GM12878 (cell line): ENCODE measurements at regions of chr6 and their contacts with region 1.

Region 1: GRCh38 chr6:144778773-144779492 is 493.8 kb downstream of the UTRN start:
- DNase-seq: no peak
- ATAC-seq: peak; percentile 71
- H3K4me3 ChIP-seq: no peak overlapping the region
- H3K27ac ChIP-seq: no peak overlapping the region
- H3K4me1 ChIP-seq: no peaks in the 10 kb centered on the region
- H3K27me3 ChIP-seq: no peaks in the 10 kb centered on the region
- CTCF ChIP-seq: peak; percentile 23 to 36 (median 30); a peak in 3 of 6 replicates
- EP300 ChIP-seq: no peak
- POLR2A ChIP-seq: no peak
- RAD21 ChIP-seq: 0 out of 2 replicates have a peak, but pooled peaks have one; percentile 40

Region 2: DNA sequence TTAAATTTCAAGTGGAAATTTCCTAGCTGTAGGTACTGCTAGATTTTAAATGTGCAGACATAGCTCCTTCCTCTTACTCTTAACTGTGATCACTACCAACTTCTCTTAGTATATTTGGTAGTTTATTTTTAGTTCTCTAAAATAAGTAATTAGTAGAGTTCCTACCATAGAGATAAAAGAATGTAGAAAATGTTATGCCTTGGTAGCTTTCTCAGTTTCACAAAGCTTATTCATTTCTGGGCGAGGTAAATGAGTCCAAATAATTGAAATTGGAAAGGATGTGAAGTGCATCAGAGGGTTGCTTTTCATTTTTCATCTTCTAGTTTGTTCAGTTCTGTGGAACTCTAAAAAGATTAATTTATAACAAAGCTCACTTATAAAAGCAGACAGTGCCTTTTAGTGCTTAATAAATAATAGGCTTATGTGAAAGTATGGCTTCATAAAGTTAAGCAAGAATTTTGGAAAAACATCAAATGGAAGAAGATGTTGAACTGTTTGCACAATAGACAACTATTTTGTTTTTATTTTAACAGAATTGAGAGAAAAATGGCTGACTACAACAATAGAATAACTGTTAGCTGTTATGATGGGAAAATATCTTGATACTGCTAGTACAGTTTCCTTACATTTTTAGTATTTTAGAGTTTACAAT is 190.1 kb before region 1 on chr6:
- CTCF ChIA-PET with region 1: interaction called, 93 read pairs
- POLR2A ChIA-PET with region 1: no interaction called
- RAD21 ChIA-PET with region 1: interaction called, 61 read pairs
- SMC1A ChIA-PET with region 1: interaction called, 51 read pairs
- in situ Hi-C with region 1: no loop called
- intact Hi-C with region 1: loop called (anchors 1 kb)
- DNase-seq: no peak
- ATAC-seq: peak; percentile 91
- H3K4me3 ChIP-seq: no peak overlapping the region
- H3K27ac ChIP-seq: no peak overlapping the region
- H3K4me1 ChIP-seq: peaks cover 17% of the 10 kb centered on the region; the same call in 1 of the 2 replicates
- H3K27me3 ChIP-seq: no peaks in the 10 kb centered on the region
- CTCF ChIP-seq: no peak
- EP300 ChIP-seq: no peak
- POLR2A ChIP-seq: no peak
- RAD21 ChIP-seq: no peak

Region 3: GRCh38 chr6:144595266-144595665 is 183.7 kb before region 1 on chr6:
- CTCF ChIA-PET with region 1: interaction called, 12 read pairs
- POLR2A ChIA-PET with region 1: no interaction called
- RAD21 ChIA-PET with region 1: interaction called, 4 read pairs
- SMC1A ChIA-PET with region 1: interaction called, 3 read pairs
- in situ Hi-C with region 1: no loop called
- intact Hi-C with region 1: no loop called
- DNase-seq: no peak
- ATAC-seq: no peak
- H3K4me3 ChIP-seq: no peak overlapping the region
- H3K27ac ChIP-seq: no peak overlapping the region
- H3K4me1 ChIP-seq: no peaks in the 10 kb centered on the region
- H3K27me3 ChIP-seq: no peaks in the 10 kb centered on the region
- CTCF ChIP-seq: no peak
- EP300 ChIP-seq: no peak
- POLR2A ChIP-seq: no peak
- RAD21 ChIP-seq: no peak

Region 4: GRCh38 chr6:144647971-144648651 is 130.8 kb before region 1 on chr6:
- CTCF ChIA-PET with region 1: interaction called, 48 read pairs
- POLR2A ChIA-PET with region 1: no interaction called
- RAD21 ChIA-PET with region 1: interaction called, 27 read pairs
- SMC1A ChIA-PET with region 1: interaction called, 28 read pairs
- in situ Hi-C with region 1: no loop called
- intact Hi-C with region 1: no loop called
- DNase-seq: no peak
- ATAC-seq: no peak
- H3K4me3 ChIP-seq: no peak overlapping the region
- H3K27ac ChIP-seq: no peak overlapping the region
- H3K4me1 ChIP-seq: no peaks in the 10 kb centered on the region
- H3K27me3 ChIP-seq: no peaks in the 10 kb centered on the region
- CTCF ChIP-seq: no peak; a peak in 1 of 6 replicates
- EP300 ChIP-seq: no peak
- POLR2A ChIP-seq: no peak
- RAD21 ChIP-seq: no peak

Region 5: DNA sequence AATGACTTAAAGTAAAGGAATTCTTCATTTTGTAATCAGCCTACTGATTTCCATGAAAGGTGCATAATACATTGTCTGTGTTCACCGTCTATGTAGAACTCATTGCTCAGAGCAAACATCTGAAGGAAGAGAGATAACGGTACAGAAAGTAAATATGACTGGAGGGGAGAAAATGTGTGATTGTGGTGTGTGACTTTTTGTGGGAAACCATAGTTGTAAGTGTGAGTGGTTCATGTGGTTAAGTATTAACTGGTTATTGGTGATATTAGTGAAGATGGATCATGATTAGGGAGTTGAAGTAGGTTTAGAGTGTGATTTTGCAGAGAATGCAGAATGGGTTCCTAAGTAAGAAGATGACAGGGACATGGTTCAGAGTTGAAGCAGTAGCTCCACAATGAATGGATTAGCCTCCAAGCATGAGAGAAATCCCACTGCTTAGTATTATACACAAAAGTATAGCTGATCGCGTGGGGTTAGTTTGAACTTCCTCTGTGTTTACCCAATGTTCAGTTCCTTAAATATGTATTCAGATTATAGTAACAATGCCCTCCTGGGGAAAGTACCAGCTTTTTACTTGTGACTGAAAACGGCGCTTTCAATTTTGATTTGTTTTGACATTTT is 124.9 kb before region 1 on chr6:
- CTCF ChIA-PET with region 1: interaction called, 48 read pairs
- POLR2A ChIA-PET with region 1: no interaction called
- RAD21 ChIA-PET with region 1: interaction called, 27 read pairs
- SMC1A ChIA-PET with region 1: interaction called, 28 read pairs
- in situ Hi-C with region 1: no loop called
- intact Hi-C with region 1: no loop called
- DNase-seq: peak; percentile 45
- ATAC-seq: peak; percentile 97
- H3K4me3 ChIP-seq: peak overlapping the region; percentile 19; the same call in 1 of the 2 replicates
- H3K27ac ChIP-seq: peak overlapping the region; percentile 50
- H3K4me1 ChIP-seq: peaks cover 8% of the 10 kb centered on the region
- H3K27me3 ChIP-seq: no peaks in the 10 kb centered on the region
- CTCF ChIP-seq: no peak
- EP300 ChIP-seq: peak; percentile 50 to 53; a peak in 1 of 4 replicates
- POLR2A ChIP-seq: no peak
- RAD21 ChIP-seq: no peak

Region 6: GRCh38 chr6:144758626-144759025 is 20.3 kb before region 1 on chr6:
- CTCF ChIA-PET with region 1: interaction called, 11 read pairs
- POLR2A ChIA-PET with region 1: no interaction called
- RAD21 ChIA-PET with region 1: interaction called, 4 read pairs
- SMC1A ChIA-PET with region 1: interaction called, 5 read pairs
- in situ Hi-C with region 1: no loop called
- intact Hi-C with region 1: no loop called
- DNase-seq: no peak
- ATAC-seq: peak; percentile 57
- H3K4me3 ChIP-seq: no peak overlapping the region
- H3K27ac ChIP-seq: no peak overlapping the region
- H3K4me1 ChIP-seq: no peaks in the 10 kb centered on the region; the same call in 1 of the 2 replicates
- H3K27me3 ChIP-seq: no peaks in the 10 kb centered on the region
- CTCF ChIP-seq: no peak
- EP300 ChIP-seq: no peak
- POLR2A ChIP-seq: no peak
- RAD21 ChIP-seq: no peak

Region 7: GRCh38 chr6:144793744-144794143 is 14.8 kb after region 1 on chr6:
- CTCF ChIA-PET with region 1: interaction called, 8 read pairs
- POLR2A ChIA-PET with region 1: no interaction called
- RAD21 ChIA-PET with region 1: no interaction called
- SMC1A ChIA-PET with region 1: interaction called, 11 read pairs
- in situ Hi-C with region 1: no loop called
- intact Hi-C with region 1: no loop called
- DNase-seq: no peak
- ATAC-seq: no peak
- H3K4me3 ChIP-seq: no peak overlapping the region
- H3K27ac ChIP-seq: no peak overlapping the region
- H3K4me1 ChIP-seq: no peaks in the 10 kb centered on the region
- H3K27me3 ChIP-seq: no peaks in the 10 kb centered on the region
- CTCF ChIP-seq: no peak
- EP300 ChIP-seq: no peak
- POLR2A ChIP-seq: no peak
- RAD21 ChIP-seq: no peak